Sciatic nerve (tissue), 2 donors: ENCODE measurements at regions of chr6 and their contacts with region 1.

Region 1: DNA sequence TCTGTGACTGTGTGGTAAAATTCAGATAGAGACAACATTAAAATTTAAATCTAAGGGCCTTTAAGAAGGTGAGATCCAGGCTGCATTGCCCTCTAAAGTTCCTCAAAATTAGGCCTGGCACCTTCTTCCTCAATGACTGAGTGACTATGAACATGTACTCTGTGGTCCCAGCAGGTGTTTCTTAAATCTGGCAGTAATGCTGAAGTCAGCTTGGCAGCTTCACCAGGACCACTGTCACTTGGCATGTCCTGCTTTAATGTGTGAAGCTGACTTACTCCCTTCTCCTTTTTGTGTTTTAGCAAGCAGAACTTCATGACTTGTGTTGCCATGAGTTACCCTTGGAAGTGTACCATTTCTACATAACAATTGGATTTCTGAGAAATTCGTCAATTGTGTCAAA is 141.7 kb downstream of the NKAIN2 start:
- DNase-seq: no peak
- ATAC-seq: no peak

Region 2: DNA sequence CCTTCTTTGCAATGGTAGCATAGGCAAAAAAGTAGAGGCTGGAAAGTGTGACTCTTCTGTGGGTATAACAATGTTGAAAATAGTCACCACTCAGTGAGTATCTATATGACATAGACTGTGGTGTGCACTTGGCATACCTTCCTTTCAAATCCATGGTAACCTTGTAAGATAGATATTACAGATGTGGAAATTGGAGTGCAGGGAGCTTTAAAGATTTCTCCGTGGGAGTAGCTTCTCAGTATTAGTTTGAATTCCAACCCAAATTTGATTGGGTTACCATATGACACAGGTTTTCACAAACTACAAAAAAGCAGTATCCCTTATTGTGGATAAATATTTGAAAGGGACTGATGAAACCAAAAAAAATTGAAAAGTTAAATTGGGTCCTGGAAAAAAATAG is 785.5 kb before region 1 on chr6:
- intact Hi-C with region 1: loop called (anchors 5 kb)
- DNase-seq: no peak
- ATAC-seq: no peak

Region 3: GRCh38 chr6:123888771-123889513 is 56.4 kb before region 1 on chr6:
- intact Hi-C with region 1: no loop called
- DNase-seq: no peak
- ATAC-seq: no peak